ENCODE measurements at regions of chr10 and their contacts with region 1.

Region 1: DNA sequence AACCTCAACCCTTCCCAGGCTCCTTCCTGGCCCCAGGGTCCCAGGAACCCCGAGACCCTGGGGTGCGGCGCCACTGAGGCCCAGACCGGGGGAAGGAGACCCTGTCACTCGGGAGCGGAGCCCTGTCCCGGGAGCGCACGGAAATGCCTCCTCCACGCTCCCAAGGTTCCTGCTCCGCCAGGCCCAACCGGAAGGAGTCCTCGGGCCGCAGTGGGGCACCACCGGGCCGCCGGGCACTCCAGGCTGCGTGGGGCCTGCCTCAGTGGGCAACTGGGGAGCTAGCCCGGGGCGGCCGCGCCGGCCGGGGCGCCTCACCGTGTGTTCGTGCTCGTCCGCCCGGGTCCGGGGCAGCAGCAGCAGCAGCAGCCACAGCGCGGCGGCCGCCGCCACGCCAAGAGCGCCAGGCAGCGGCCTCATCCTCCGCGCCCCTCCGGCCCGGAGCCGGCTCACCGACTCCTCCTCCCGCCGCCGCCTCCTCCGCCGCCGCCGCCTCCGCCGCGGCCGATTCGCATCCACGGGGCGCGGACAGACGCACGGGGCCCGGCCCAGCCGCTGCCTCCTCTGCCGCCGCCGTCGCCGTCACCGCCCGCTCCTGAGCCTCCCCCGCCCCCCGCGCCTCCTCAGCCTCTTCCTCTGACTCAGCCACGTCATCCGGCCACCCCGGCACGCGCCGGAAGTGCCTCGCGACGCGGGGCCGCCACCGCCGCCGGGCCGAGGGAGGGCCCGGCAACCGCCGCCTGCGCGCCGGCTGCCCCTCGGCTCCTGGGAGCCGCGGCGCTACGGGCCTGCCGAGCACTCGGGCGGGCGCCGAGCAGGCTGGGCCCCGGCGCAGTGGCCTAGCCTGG is at the start of gene TM9SF3:
- DNase-seq: peak; percentile 94
- H3K4me3 Mint-ChIP-seq: peak within 1 kb of the TSS; percentile 84
- H3K27ac Mint-ChIP-seq: peak within 1 kb of the TSS; percentile 88
- H3K4me1 Mint-ChIP-seq: peaks cover 32% of the 10 kb centered on the region
- H3K27me3 Mint-ChIP-seq: peaks cover 2% of the 10 kb centered on the region
- total RNA-seq, gene TM9SF3: 39.6 to 41.0 TPM

Region 2: DNA sequence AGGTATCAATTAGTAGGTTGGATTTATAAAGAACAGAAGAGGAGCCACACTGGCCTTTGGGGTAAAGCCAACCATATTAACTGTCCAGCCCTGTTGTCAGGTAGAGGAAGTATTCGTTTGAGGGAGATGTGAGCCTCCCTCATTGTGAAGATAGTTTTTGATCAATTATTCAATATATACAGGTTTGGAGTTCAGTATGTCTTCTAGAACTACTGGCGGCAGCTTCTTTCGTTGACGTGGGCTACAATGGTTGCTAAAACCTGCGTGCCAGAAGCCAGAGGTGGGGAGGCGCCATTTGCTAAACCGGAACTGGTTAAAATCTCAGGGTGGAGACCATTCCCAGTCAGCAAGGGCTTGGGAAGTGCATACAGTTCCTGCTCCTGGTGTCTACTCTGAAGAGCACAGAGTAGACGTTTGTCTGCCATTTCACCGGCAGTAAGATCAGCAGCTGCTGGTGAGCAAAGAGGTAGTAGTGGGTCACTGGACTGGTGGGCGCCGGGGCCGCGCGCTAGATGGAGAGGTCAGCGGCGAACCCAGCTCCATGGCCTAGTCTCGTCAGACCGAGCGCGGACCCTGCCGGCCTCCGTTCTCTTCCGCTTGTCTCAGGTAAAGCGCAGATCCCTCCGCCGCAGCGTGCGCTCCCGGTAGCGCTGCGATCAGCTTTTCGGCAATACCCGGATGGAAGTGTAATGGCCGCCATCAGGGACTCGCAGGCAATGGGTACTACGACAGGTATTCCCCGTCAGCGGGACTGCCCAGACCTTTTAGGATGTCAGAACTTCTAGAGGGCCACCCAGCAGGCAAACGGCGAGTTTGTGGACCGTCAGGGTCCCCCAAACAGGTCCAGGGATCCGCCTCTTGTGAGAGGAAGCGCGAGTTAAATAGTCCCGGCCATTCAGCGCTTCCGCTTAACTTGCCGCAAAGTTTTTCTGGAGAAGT is 457.0 kb before region 1 on chr10 and contains the start of gene ZNF518A:
- CTCF ChIA-PET with region 1: no interaction called
- intact Hi-C with region 1: loop called (anchors 2 kb)
- DNase-seq: peak; percentile 91
- H3K4me3 Mint-ChIP-seq: peak within 1 kb of the TSS; percentile 97
- H3K27ac Mint-ChIP-seq: peak within 1 kb of the TSS; percentile 99
- H3K4me1 Mint-ChIP-seq: peaks cover 13% of the 10 kb centered on the region
- H3K27me3 Mint-ChIP-seq: peaks cover 30% of the 10 kb centered on the region
- total RNA-seq, gene ZNF518A: 10.7 to 12.1 TPM

Region 3: DNA sequence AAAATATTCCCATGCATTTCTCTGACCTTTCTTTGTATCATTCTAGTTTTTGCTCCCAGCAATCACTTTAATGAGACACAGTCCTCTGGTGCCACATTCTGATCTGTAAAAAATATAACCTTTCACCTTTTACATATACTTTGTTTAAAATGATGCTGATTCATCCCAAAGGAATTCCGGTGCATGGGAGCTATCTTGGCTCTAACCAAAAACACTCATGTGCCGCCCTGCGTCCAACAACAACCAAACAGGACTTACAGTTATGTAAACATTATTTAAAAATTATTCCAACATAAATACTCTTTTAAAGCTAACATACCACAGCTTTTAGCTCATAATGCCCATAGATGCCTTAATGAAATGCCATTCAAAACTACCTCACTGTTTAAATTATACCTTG is 220.1 kb before region 1 on chr10:
- CTCF ChIA-PET with region 1: no interaction called
- intact Hi-C with region 1: no loop called
- DNase-seq: no peak
- H3K4me3 Mint-ChIP-seq: no peak overlapping the region
- H3K27ac Mint-ChIP-seq: no peak overlapping the region
- H3K4me1 Mint-ChIP-seq: no peaks in the 10 kb centered on the region
- H3K27me3 Mint-ChIP-seq: no peaks in the 10 kb centered on the region

Region 4: GRCh38 chr10:96565774-96566173 is 20.9 kb before region 1 on chr10:
- CTCF ChIA-PET with region 1: no interaction called
- intact Hi-C with region 1: loop called (anchors 1 kb)
- DNase-seq: no peak
- H3K4me3 Mint-ChIP-seq: no peak overlapping the region
- H3K27ac Mint-ChIP-seq: no peak overlapping the region
- H3K4me1 Mint-ChIP-seq: peaks cover 29% of the 10 kb centered on the region
- H3K27me3 Mint-ChIP-seq: no peaks in the 10 kb centered on the region

Region 5: DNA sequence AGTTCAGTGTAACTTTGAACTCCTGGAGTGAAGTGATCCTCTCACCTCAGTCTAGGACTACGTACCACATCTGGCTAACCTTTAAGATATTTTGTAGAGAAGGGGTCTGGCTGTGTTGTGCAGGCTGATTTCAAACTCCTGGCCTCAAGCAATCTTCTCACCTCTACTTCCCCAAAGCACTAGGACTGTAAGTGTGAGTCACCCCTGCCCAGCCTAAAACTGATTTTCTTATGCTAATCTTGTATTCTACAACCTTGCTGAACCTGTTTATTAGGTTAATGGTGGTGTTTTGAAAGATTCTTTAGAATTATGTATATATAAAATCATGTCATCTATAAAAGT is 303.5 kb after region 1 on chr10:
- CTCF ChIA-PET with region 1: no interaction called
- intact Hi-C with region 1: loop called (anchors 10 kb)
- DNase-seq: no peak
- H3K4me3 Mint-ChIP-seq: no peak overlapping the region
- H3K27ac Mint-ChIP-seq: no peak overlapping the region
- H3K4me1 Mint-ChIP-seq: peaks cover 34% of the 10 kb centered on the region
- H3K27me3 Mint-ChIP-seq: no peaks in the 10 kb centered on the region

Region 6: GRCh38 chr10:97292097-97292862 is 705.6 kb after region 1 on chr10 and contains the start of gene ARHGAP19:
- CTCF ChIA-PET with region 1: no interaction called
- intact Hi-C with region 1: loop called (anchors 2 kb)
- DNase-seq: peak; percentile 98
- H3K4me3 Mint-ChIP-seq: peak within 1 kb of the TSS; percentile 91
- H3K27ac Mint-ChIP-seq: peak within 1 kb of the TSS; percentile 88
- H3K4me1 Mint-ChIP-seq: peaks cover 23% of the 10 kb centered on the region
- H3K27me3 Mint-ChIP-seq: no peaks in the 10 kb centered on the region
- total RNA-seq, gene ARHGAP19: 76.7 to 91.9 TPM

Region 7: GRCh38 chr10:97640174-97640867 is 1053.7 kb after region 1 on chr10 and contains the start of gene PI4K2A:
- CTCF ChIA-PET with region 1: no interaction called
- intact Hi-C with region 1: loop called (anchors 10 kb)
- DNase-seq: peak; percentile 100
- H3K4me3 Mint-ChIP-seq: peak within 1 kb of the TSS; percentile 93
- H3K27ac Mint-ChIP-seq: peak within 1 kb of the TSS; percentile 73
- H3K4me1 Mint-ChIP-seq: peaks cover 18% of the 10 kb centered on the region
- H3K27me3 Mint-ChIP-seq: no peaks in the 10 kb centered on the region
- total RNA-seq, gene PI4K2A: 8.9 to 9.4 TPM